Heart right ventricle (tissue), 16 donors: ENCODE measurements at regions of chr10 and their contacts with region 1.

Region 1: GRCh38 chr10:52215745-52216361 is 98.2 kb upstream of the DKK1 start:
- DNase-seq: peak in 1 of 2 donors; percentile 52
- ATAC-seq: peak in 7 of 8 donors; percentile 41 to 77 (median 67)
- H3K4me3 ChIP-seq: no peak overlapping the region
- H3K27ac ChIP-seq: no peak overlapping the region
- H3K4me1 ChIP-seq: peaks cover 0 to 23% (median 4%) of the 10 kb centered on the region in 9 donors
- H3K27me3 ChIP-seq: no peaks in the 10 kb centered on the region
- CTCF ChIP-seq: peak; percentile 53 to 82 (median 74)

Region 2: GRCh38 chr10:51001587-51001986 is 1214.3 kb before region 1 on chr10:
- intact Hi-C with region 1: loop called in 8 of 10 experiments (anchors 5 to 10 kb)
- DNase-seq: no peak
- ATAC-seq: peak in 5 of 8 donors; percentile 54 to 88 (median 65)
- H3K4me3 ChIP-seq: no peak overlapping the region
- H3K27ac ChIP-seq: peak overlapping the region in 6 of 10 donors; percentile 3 to 59 (median 38)
- H3K4me1 ChIP-seq: peaks cover 0 to 74% (median 12%) of the 10 kb centered on the region in 9 donors
- H3K27me3 ChIP-seq: peaks cover 0 to 3% (median 0%) of the 10 kb centered on the region in 7 donors
- CTCF ChIP-seq: peak; percentile 31 to 73 (median 65)

Region 3: GRCh38 chr10:51063659-51064535 is 1152.0 kb before region 1 on chr10:
- intact Hi-C with region 1: loop called in 4 of 10 experiments (anchors 5 to 10 kb)
- DNase-seq: no peak
- ATAC-seq: peak in 5 of 8 donors; percentile 47 to 69 (median 55)
- H3K4me3 ChIP-seq: no peak overlapping the region
- H3K27ac ChIP-seq: no peak overlapping the region
- H3K4me1 ChIP-seq: peaks cover 0 to 19% (median 3%) of the 10 kb centered on the region in 9 donors
- H3K27me3 ChIP-seq: no peaks in the 10 kb centered on the region
- CTCF ChIP-seq: peak in 8 of 9 donors; percentile 41 to 74 (median 66)

Region 4: GRCh38 chr10:51960494-51960895 is 255.4 kb before region 1 on chr10:
- intact Hi-C with region 1: loop called in 1 of 10 experiments (anchors 10 kb)
- DNase-seq: peak in 1 of 2 donors; percentile 15
- ATAC-seq: peak in 7 of 8 donors; percentile 39 to 69 (median 59)
- H3K4me3 ChIP-seq: no peak overlapping the region
- H3K27ac ChIP-seq: no peak overlapping the region
- H3K4me1 ChIP-seq: peaks cover 0 to 24% (median 4%) of the 10 kb centered on the region in 9 donors
- H3K27me3 ChIP-seq: no peaks in the 10 kb centered on the region
- CTCF ChIP-seq: peak; percentile 17 to 69 (median 51)

Region 5: DNA sequence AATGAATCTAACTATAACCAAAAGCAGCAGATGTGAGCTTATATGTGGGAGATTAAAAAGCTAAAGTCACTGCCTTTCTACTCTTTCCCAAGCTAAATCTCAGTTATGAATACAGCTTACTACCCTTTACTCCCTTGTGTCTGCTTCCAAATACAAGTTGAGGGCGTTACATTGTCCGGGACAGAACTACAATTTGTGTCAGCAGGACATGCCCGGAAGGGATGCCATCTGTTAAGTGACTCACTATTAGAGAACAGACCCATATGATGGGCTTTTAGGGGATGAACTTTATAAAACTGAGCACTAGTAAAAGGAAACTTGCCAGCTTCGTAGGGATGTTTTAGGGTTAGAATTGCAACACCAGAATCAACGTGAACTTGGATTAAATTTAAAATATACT is 216.8 kb before region 1 on chr10:
- intact Hi-C with region 1: loop called in 1 of 10 experiments (anchors 10 kb)
- DNase-seq: no peak
- ATAC-seq: peak in 1 of 8 donors; percentile 35
- H3K4me3 ChIP-seq: no peak overlapping the region
- H3K27ac ChIP-seq: no peak overlapping the region
- H3K4me1 ChIP-seq: peaks cover 0 to 14% (median 0%) of the 10 kb centered on the region in 9 donors
- H3K27me3 ChIP-seq: no peaks in the 10 kb centered on the region
- CTCF ChIP-seq: no peak

Region 6: GRCh38 chr10:52092390-52092789 is 123.5 kb before region 1 on chr10:
- intact Hi-C with region 1: no loop called
- DNase-seq: no peak
- ATAC-seq: no peak
- H3K4me3 ChIP-seq: no peak overlapping the region
- H3K27ac ChIP-seq: no peak overlapping the region
- H3K4me1 ChIP-seq: no peaks in the 10 kb centered on the region
- H3K27me3 ChIP-seq: no peaks in the 10 kb centered on the region
- CTCF ChIP-seq: no peak